Colonic mucosa (tissue), 4 donors: ENCODE measurements at regions of chr10 and their contacts with region 1.

Region 1: GRCh38 chr10:105691811-105692210 is 1050.7 kb downstream of the SORCS3 start:
- DNase-seq: peak; percentile 32
- H3K4me3 ChIP-seq: no peak overlapping the region
- H3K27ac ChIP-seq: no peak overlapping the region
- H3K4me1 ChIP-seq: no peaks in the 10 kb centered on the region
- H3K27me3 ChIP-seq: no peaks in the 10 kb centered on the region
- CTCF ChIP-seq: no peak

Region 2: DNA sequence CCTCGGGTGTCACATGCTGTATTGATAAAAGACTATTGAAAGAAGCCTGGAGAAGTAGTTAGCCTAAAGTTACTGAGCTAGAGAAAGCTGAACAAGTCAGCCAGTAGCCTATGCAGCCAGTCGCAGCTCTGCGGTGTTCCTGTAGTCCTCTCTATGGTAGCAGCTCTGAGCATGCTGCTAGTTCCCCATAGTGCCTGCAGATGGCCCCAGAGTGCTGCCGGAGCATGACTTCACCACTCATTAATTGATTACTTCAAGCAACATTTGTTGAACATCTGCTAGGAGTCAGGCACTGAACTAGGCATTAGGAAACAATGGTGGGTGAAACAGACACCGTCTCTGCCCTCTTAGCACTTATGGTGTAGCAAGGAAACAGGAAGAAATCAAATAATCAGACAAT is 628.0 kb before region 1 on chr10:
- intact Hi-C with region 1: loop called (anchors 10 kb)
- DNase-seq: peak; percentile 22
- H3K4me3 ChIP-seq: no peak overlapping the region
- H3K27ac ChIP-seq: no peak overlapping the region
- H3K4me1 ChIP-seq: no peaks in the 10 kb centered on the region
- H3K27me3 ChIP-seq: no peaks in the 10 kb centered on the region
- CTCF ChIP-seq: peak; percentile 56

Region 3: DNA sequence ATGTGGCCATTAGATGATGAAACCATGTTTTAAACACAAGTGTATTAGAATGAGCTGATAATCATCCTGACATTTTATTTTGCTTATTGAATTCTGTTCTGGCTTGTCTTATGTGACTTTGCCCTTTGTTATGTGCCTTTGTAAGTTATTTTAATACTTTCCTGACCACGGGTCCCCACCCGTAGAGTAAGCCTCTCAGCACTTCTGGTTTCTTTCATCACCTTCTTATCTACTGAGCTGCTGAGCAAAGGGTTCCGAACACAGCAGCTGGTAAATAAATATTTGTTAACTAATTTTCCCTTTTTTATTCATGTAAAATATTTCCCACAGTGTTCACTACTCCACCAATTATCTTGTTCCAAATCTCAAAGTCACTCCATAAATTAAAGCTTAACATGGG is 64.6 kb after region 1 on chr10:
- intact Hi-C with region 1: no loop called
- DNase-seq: no peak
- H3K4me3 ChIP-seq: no peak overlapping the region
- H3K27ac ChIP-seq: no peak overlapping the region
- H3K4me1 ChIP-seq: no peaks in the 10 kb centered on the region
- H3K27me3 ChIP-seq: no peaks in the 10 kb centered on the region
- CTCF ChIP-seq: no peak